ENCODE measurements at regions of chr2 and their contacts with region 1.

Region 1: DNA sequence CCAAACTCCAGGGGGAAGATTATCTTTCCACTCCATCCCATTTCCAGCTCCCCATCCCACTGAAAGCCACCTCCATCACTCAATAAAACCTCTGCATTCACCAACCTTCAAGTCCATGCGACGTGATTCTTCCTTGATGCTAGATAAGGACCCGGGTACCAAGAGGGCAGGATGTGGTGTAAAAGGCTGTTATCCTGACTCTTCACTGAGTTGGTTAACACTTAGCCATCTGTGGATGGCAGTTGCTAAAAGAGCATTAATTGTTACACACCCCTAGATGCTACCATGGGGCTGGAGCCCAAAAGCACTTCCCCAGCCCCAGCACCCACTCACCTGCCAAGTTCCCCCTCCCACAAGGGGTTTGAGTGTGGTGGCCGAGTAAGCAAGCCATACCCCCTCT is 53.4 kb upstream of the DPP10 start:
- DNase-seq: no peak
- H3K4me3 ChIP-seq: no peak overlapping the region
- H3K27ac ChIP-seq: no peak overlapping the region
- H3K4me1 ChIP-seq: no peaks in the 10 kb centered on the region
- CTCF ChIP-seq: no peak

Region 2: DNA sequence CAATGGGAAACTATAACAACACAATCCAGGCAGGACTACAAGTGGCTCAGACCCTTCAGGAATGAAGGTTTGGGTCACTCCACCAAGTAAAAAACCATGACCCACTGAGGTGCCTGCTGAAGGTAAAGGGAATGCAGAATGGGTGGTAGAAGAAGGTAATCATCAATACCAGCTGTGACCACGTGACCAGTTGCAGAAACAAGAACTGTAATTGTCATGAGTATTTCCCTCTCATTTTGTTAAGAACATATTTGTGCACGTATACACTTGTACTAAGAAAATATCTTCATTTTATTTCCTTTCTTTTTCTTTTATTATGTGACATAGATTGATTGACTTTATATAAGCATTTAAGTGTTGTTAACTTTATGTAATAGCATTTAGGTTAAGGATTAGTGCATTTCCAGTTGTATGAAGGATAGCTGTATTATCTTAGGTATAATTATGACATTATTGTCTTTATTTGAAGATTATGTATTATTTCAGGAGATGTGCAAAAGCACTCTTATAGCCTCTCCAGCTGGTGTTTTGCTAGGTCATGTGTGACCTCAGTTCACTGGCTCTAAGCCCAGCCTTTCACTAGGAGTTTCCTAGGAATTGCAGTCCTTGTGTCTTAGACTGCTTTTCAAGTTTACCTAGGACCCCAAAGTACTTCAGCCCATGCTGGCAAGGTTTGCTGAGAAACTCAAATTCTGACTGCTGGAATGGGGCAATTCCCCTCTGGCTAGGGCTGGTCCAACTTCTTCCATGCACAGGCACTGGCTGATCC is 72.3 kb before region 1 on chr2:
- CTCF ChIA-PET with region 1: no interaction called
- POLR2A ChIA-PET with region 1: no interaction called
- intact Hi-C with region 1: loop called (anchors 5 kb)
- DNase-seq: no peak
- H3K4me3 ChIP-seq: no peak overlapping the region
- H3K27ac ChIP-seq: no peak overlapping the region
- H3K4me1 ChIP-seq: no peaks in the 10 kb centered on the region
- CTCF ChIP-seq: no peak

Region 3: GRCh38 chr2:114400890-114401289 is 11.9 kb after region 1 on chr2:
- CTCF ChIA-PET with region 1: no interaction called
- POLR2A ChIA-PET with region 1: no interaction called
- intact Hi-C with region 1: no loop called
- DNase-seq: no peak
- H3K4me3 ChIP-seq: no peak overlapping the region
- H3K27ac ChIP-seq: no peak overlapping the region
- H3K4me1 ChIP-seq: no peaks in the 10 kb centered on the region
- CTCF ChIP-seq: no peak

Region 4: DNA sequence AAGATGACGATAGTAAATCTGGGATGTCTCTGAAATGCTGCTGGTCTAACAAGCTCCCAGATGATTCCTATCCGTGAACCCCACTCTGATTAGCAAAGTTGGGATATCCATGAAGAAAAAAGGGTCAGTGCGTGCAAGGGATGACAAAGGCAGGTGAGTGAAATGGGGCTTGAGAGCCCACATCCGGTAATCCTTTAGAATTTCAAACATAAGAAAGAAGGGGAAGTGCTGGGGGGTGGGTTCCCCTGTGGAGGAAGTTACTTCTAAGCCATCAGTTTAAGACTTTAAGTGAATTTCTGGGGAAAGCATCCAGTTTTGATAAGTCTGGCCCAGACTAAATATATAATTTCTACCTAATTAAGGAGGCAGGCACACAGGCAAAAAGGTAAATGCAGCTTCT is 262.9 kb after region 1 on chr2:
- CTCF ChIA-PET with region 1: no interaction called
- POLR2A ChIA-PET with region 1: no interaction called
- intact Hi-C with region 1: no loop called
- DNase-seq: no peak
- H3K4me3 ChIP-seq: no peak overlapping the region
- H3K27ac ChIP-seq: no peak overlapping the region
- H3K4me1 ChIP-seq: no peaks in the 10 kb centered on the region
- CTCF ChIP-seq: no peak